ENCODE measurements at regions of chr2 and their contacts with region 1.

Region 1: DNA sequence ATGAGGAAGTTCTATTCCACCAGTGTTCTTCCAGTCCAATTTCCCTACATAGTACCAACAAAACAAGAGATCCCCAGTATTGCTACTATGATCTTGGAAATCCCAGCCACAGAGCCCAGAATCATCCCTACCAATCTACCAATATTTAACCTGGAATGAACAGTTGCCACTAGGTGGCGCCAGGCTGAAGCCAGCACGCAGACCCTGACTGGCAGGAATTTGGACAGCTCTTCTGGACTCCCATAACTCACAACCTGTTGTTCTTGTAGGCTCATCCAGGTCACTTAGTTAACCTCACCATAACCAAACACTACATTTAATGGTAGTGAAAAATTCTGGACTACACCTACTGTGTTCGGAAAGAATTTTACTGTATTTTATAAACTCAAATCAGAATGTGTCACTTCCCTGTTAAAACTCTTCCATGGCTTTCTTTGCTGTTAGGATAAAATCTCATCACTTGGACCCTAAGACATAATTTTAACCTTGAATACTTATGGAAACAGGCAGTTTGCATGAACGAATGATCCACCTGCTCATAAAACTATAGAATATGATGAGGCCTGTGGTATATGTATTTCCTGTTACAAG is 59.8 kb upstream of the SLC38A11 start:
- DNase-seq: peak in 9 of 10 donors; percentile 44 to 75 (median 65)
- H3K4me3 ChIP-seq: no peak overlapping the region
- H3K27ac ChIP-seq: no peak overlapping the region
- H3K27me3 ChIP-seq: no peaks in the 10 kb centered on the region
- CTCF ChIP-seq: peak; percentile 64 to 94 (median 86)

Region 2: GRCh38 chr2:164542584-164543021 is 472.5 kb before region 1 on chr2:
- intact Hi-C with region 1: no loop called
- DNase-seq: no peak
- H3K4me3 ChIP-seq: no peak overlapping the region
- H3K27ac ChIP-seq: no peak overlapping the region
- H3K27me3 ChIP-seq: no peaks in the 10 kb centered on the region
- CTCF ChIP-seq: no peak

Region 3: GRCh38 chr2:165067958-165068757 is 53.0 kb after region 1 on chr2:
- intact Hi-C with region 1: loop called in 1 of 2 experiments (anchors 5 kb)
- DNase-seq: peak; percentile 46 to 92 (median 86)
- H3K4me3 ChIP-seq: peak overlapping the region; percentile 8 to 63 (median 41)
- H3K27ac ChIP-seq: peak overlapping the region in 49 of 59 donors; percentile 5 to 86 (median 69)
- H3K27me3 ChIP-seq: no peaks in the 10 kb centered on the region
- CTCF ChIP-seq: peak in 3 of 56 donors; percentile 4 to 8 (median 5)

Region 4: DNA sequence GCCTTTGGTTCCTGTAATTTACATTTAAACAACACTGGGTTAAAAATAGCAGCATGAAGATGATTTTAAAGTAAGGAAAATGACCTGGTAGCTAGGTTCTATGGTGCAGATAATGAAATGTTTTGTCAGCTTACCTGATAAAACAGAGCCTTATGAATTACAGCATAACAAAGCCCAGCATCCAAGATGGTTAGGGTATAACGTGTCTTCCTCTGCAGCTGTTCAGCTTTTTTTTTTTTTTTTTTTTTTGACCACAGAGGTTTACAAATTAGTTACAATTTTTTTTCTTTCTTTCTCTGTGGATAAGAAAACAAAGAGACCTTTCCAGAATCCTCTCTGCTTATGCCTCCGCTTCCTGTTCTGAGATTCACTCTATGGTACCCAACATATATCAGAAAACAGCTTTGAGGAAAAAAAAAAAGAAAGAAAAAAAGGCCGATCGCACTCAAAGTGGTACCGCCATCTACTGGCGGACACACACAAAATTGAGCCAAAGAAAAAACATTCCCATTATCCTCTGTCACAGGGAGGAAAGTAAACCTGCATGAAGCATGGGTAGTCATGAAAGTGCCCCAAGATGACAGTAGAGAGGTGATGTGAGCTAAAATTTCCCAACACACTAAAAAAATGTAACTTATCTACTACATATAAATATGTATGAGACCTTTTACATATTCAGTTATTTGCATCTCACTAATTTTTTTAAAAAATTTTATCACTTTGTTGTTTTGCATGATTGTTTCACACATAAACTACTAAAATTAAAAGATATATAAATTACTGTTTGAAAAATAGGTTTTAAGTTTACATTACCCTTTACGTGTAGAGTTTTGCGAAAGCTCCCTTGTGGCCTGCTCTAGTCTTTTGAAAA is 188.8 kb after region 1 on chr2 and contains the start of gene SCN3A:
- intact Hi-C with region 1: loop called (anchors 2 to 5 kb)
- DNase-seq: peak in 3 of 10 donors; percentile 36 to 41 (median 41)
- H3K4me3 ChIP-seq: peak within 1 kb of the TSS; percentile 13 to 71 (median 53)
- H3K27ac ChIP-seq: peak within 1 kb of the TSS in 13 of 59 donors; percentile 7 to 68 (median 29)
- H3K27me3 ChIP-seq: no peaks in the 10 kb centered on the region
- CTCF ChIP-seq: peak; percentile 67 to 95 (median 82)
- total RNA-seq, gene SCN3A: 13.0 to 56.5 (median 38.6) TPM

Region 5: GRCh38 chr2:166417669-166418068 is 1402.5 kb after region 1 on chr2:
- intact Hi-C with region 1: no loop called
- DNase-seq: no peak
- H3K4me3 ChIP-seq: no peak overlapping the region
- H3K27ac ChIP-seq: no peak overlapping the region
- H3K27me3 ChIP-seq: no peaks in the 10 kb centered on the region
- CTCF ChIP-seq: peak in 34 of 56 donors; percentile 9 to 47 (median 22)

Measured in dorsolateral prefrontal cortex (tissue), 120 donors.